Activated T-helper 1 cell treated with anti-CD3 and anti-CD28 coated beads, Interleukin-12 subunit alpha, Interleukin-12 subunit beta, Interleukin-2, Interleukin-4 antibody, amounts not matched to agents 30 ng/mL and 10 ng/mL and 1 ng/mL, durations not matched to agents 14 hours and 24 hours and 36 hours (primary cell): ENCODE measurements at regions of chr12 and their contacts with region 1.

Region 1: DNA sequence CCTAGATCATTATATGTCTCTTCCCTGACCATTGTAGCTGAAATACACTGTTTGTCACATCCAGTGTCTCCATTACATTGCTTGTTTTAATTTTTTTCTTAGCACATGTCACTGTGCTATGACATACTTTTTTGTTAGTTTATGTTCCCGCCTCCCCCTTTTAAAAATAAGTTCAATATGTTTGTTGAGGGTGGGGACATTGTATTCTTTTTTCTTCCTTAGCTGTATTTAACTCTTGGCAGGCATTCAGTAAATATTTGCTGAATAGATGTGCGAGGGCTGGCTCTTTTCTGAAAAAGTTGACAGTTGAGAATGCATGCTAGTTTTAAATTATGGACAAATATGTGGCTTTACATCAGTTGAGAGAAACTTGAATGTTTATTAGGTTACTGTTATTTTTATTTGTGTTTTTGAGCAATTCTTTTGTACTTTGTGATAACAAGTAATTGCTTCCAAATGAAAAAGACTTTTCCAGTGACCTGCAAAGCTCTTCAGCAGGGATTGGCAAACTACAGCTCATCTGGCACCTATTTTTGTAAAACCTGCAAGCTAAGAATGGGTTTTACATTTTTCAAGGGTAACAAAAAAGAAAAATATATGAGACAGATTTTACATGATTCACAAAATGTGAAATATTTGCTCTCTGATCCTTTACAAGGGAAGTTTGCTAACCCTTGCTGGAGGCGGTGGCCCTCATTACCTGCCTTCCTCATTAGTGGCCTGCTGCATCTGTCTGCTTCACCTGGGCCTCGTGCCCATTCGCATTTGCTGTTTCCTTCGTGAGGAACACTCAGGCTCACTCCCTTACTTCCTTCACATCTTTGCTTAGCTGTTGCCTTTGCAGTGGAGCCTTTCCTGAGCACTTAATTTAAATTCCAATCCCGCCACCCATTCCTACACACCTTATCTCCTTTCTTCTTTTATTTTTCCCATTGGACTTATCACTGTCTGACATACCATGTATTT is 229.4 kb downstream of the ERC1 start:
- DNase-seq: no peak
- H3K4me3 Mint-ChIP-seq: no peak overlapping the region
- H3K27ac Mint-ChIP-seq: no peak overlapping the region
- H3K4me1 Mint-ChIP-seq: no peaks in the 10 kb centered on the region
- H3K27me3 Mint-ChIP-seq: no peaks in the 10 kb centered on the region

Region 2: DNA sequence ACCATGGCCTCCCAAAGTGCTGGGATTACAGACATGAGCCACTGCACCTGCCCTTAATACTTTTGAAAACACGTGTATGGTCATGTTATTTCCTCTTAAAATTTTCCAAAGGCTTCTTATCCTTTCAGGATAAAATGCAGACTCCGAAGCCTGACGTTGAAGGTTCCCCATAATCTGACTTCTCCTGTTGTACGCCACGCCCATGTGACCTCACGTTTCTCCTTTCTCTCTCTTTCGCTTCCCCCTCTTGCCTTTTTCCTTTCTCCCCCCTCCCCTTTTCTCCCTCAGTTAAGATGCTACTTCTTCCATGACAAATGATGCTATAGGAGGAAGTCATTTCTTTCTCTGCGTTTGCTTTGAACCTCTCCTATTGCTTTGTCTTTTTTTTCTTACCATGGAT is 108.0 kb after region 1 on chr12:
- intact Hi-C with region 1: loop called (anchors 10 kb)
- DNase-seq: no peak
- H3K4me3 Mint-ChIP-seq: no peak overlapping the region
- H3K27ac Mint-ChIP-seq: no peak overlapping the region
- H3K4me1 Mint-ChIP-seq: peaks cover 10% of the 10 kb centered on the region
- H3K27me3 Mint-ChIP-seq: peaks cover 4% of the 10 kb centered on the region

Region 3: GRCh38 chr12:1562813-1563407 is 342.5 kb after region 1 on chr12:
- intact Hi-C with region 1: no loop called
- DNase-seq: no peak
- H3K4me3 Mint-ChIP-seq: no peak overlapping the region
- H3K27ac Mint-ChIP-seq: no peak overlapping the region
- H3K4me1 Mint-ChIP-seq: no peaks in the 10 kb centered on the region
- H3K27me3 Mint-ChIP-seq: peaks cover 21% of the 10 kb centered on the region